ENCODE measurements at regions of chr2 and their contacts with region 1.

Region 1: GRCh38 chr2:127415593-127416505 is 2.4 kb upstream of the PROC start:
- DNase-seq: peak; percentile 70 to 93 (median 80)
- ATAC-seq: peak; percentile 94
- H3K4me3 ChIP-seq: peak overlapping the region; percentile 70
- H3K4me3 Mint-ChIP-seq: peak overlapping the region; percentile 87
- H3K27ac ChIP-seq: no peak overlapping the region
- H3K27ac Mint-ChIP-seq: peak overlapping the region; percentile 45
- H3K4me1 ChIP-seq: peaks cover 28% of the 10 kb centered on the region
- H3K4me1 Mint-ChIP-seq: peaks cover 21% of the 10 kb centered on the region
- H3K27me3 ChIP-seq: peaks cover 0 to 3% of the 10 kb centered on the region in 2 experiments
- H3K27me3 Mint-ChIP-seq: peaks cover 5% of the 10 kb centered on the region
- CTCF ChIP-seq: peak; percentile 78

Region 2: DNA sequence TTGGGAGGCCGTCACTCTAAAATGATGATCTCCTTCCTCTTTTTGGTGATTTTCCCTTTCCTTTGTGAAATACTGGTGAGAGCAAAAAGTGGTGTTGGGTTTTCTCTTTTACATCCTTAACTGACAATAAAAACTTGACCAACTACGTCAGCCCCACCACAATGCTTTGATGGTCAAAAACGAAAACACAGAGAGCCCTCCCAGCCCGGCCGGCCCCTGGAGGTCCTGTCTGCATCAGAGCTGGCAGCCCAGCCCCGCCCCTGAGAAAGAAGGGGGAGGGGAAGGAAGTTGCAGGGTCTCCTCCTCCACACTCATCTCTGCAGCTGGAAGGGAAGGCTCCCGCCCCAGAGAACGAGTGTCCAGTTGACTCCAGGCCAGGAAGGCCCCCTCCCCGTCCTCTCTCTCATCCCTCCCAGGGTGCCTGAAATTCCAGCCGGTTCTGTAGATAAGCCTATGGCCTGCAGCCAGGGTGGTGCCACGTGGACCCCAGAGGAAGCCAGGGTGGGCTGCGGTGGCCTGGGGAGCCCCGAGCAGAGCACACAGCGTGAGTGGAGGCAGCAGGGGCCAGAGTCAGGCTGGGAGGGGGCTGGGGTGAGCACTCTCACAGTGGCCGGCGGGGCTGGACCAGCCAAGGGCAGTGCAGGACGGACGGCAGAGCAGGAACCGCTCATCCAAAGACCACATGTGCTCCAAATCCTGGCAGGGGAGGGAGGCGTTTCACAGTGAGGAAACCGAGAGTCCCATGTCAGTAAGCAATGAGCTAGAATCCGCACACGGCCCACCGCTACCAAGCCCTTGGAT is 328.7 kb before region 1 on chr2:
- CTCF ChIA-PET with region 1: no interaction called
- POLR2A ChIA-PET with region 1: no interaction called
- intact Hi-C with region 1: loop called in 1 of 2 experiments (anchors 10 kb)
- DNase-seq: peak in 1 of 14 experiments; percentile 34
- ATAC-seq: no peak
- H3K4me3 ChIP-seq: no peak overlapping the region
- H3K4me3 Mint-ChIP-seq: no peak overlapping the region
- H3K27ac ChIP-seq: no peak overlapping the region
- H3K27ac Mint-ChIP-seq: peak overlapping the region; percentile 99
- H3K4me1 ChIP-seq: peaks cover 46% of the 10 kb centered on the region
- H3K4me1 Mint-ChIP-seq: peaks cover 38% of the 10 kb centered on the region
- H3K27me3 ChIP-seq: no peaks in the 10 kb centered on the region
- H3K27me3 Mint-ChIP-seq: no peaks in the 10 kb centered on the region
- CTCF ChIP-seq: no peak

Region 3: DNA sequence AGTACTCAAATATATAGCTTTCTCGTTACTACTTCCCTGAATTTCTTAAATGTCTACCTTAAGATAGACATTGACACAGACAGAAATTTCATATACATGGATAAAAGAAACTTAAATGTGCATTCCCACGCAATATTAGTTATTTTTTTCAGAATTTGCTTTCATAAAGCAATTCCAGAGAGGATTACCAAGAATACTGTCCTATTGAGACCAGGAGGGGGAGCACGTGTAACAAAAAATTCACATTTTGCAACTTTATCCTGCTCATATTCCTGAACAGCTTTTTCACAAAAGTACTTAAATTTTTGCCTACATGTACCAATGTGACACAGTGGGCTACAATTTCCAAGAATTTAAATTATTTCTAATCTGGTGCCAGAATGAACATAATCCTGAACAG is 91.2 kb before region 1 on chr2:
- CTCF ChIA-PET with region 1: no interaction called
- POLR2A ChIA-PET with region 1: no interaction called
- intact Hi-C with region 1: loop called in 1 of 2 experiments (anchors 10 kb)
- DNase-seq: peak in 4 of 14 experiments; percentile 9 to 26 (median 20)
- ATAC-seq: no peak
- H3K4me3 ChIP-seq: no peak overlapping the region
- H3K4me3 Mint-ChIP-seq: no peak overlapping the region
- H3K27ac ChIP-seq: no peak overlapping the region
- H3K27ac Mint-ChIP-seq: no peak overlapping the region
- H3K4me1 ChIP-seq: no peaks in the 10 kb centered on the region
- H3K4me1 Mint-ChIP-seq: no peaks in the 10 kb centered on the region
- H3K27me3 ChIP-seq: no peaks in the 10 kb centered on the region
- H3K27me3 Mint-ChIP-seq: no peaks in the 10 kb centered on the region
- CTCF ChIP-seq: peak; percentile 38

Region 4: DNA sequence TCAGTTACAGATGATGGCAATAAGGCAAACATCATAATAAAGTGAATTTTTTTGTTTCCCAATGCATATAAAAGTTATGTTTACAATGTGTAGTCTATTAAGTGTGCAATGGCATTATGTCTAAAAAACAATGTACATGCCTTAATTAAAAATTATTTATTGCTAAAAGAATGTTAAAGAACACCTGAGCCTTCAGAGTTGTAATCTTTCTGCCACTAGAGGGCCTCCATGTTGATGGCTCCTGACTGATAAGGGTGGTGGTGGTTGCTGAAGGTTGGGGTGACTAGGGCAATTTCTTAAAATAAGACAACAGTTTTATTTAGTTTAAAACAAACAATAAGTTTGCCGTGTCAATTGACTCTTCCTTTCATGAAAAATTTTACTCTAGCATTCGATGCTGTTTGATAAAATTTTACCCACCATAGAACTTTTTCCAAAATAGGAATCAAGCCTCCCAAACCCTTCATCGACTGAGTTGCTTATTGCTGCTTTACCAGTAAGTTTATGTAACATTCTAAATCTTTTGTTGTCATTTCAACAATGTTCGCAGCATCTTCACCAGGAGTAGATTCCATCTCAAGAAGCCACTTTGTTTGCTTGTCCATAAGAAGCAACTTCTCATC is 60.4 kb before region 1 on chr2:
- CTCF ChIA-PET with region 1: interaction called, 6 read pairs
- POLR2A ChIA-PET with region 1: no interaction called
- intact Hi-C with region 1: loop called (anchors 1 to 2 kb)
- DNase-seq: peak in 10 of 14 experiments; percentile 6 to 73 (median 22)
- ATAC-seq: peak; percentile 81
- H3K4me3 ChIP-seq: no peak overlapping the region
- H3K4me3 Mint-ChIP-seq: no peak overlapping the region
- H3K27ac ChIP-seq: no peak overlapping the region
- H3K27ac Mint-ChIP-seq: peak overlapping the region; percentile 1
- H3K4me1 ChIP-seq: no peaks in the 10 kb centered on the region
- H3K4me1 Mint-ChIP-seq: peaks cover 82% of the 10 kb centered on the region
- H3K27me3 ChIP-seq: no peaks in the 10 kb centered on the region
- H3K27me3 Mint-ChIP-seq: no peaks in the 10 kb centered on the region
- CTCF ChIP-seq: peak; percentile 79

Region 5: DNA sequence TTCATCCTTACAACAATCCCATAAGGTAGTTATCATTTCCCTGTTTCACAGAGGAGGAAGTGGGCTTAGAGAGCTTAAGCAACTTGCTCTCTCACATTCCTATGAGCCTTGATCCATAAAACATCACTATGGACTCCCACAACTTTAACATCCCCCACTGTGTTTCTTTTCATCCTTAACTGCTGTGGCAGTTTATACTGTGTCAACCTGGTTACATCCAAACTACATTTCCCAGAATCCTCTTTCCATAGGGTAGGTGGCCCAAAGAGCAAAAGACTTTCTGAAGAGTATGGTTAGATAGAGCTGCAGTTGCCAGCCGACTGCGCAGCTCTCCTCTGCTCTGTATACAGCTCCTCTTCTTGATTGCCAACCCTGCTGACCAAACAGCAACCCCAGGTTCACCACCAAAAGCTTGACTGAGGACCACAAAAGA is 50.6 kb before region 1 on chr2:
- CTCF ChIA-PET with region 1: interaction called, 17 read pairs
- POLR2A ChIA-PET with region 1: no interaction called
- intact Hi-C with region 1: no loop called
- DNase-seq: no peak
- ATAC-seq: peak; percentile 60
- H3K4me3 ChIP-seq: no peak overlapping the region
- H3K4me3 Mint-ChIP-seq: no peak overlapping the region
- H3K27ac ChIP-seq: no peak overlapping the region
- H3K27ac Mint-ChIP-seq: peak overlapping the region; percentile 14
- H3K4me1 ChIP-seq: peaks cover 14% of the 10 kb centered on the region
- H3K4me1 Mint-ChIP-seq: peaks cover 77% of the 10 kb centered on the region
- H3K27me3 ChIP-seq: no peaks in the 10 kb centered on the region
- H3K27me3 Mint-ChIP-seq: no peaks in the 10 kb centered on the region
- CTCF ChIP-seq: no peak

Region 6: GRCh38 chr2:127387655-127388422 is 28.0 kb before region 1 on chr2 and contains the start of gene MAP3K2:
- CTCF ChIA-PET with region 1: interaction called, 29 read pairs
- POLR2A ChIA-PET with region 1: interaction called, 20 read pairs
- intact Hi-C with region 1: loop called (anchors 1 to 2 kb)
- DNase-seq: peak; percentile 87 to 99 (median 96)
- ATAC-seq: peak; percentile 69
- H3K4me3 ChIP-seq: peak within 1 kb of the TSS; percentile 82
- H3K4me3 Mint-ChIP-seq: peak within 1 kb of the TSS; percentile 98
- H3K27ac ChIP-seq: peak within 1 kb of the TSS; percentile 99 to 100
- H3K27ac Mint-ChIP-seq: peak within 1 kb of the TSS; percentile 100
- H3K4me1 ChIP-seq: peaks cover 33% of the 10 kb centered on the region
- H3K4me1 Mint-ChIP-seq: peaks cover 69% of the 10 kb centered on the region
- H3K27me3 ChIP-seq: no peaks in the 10 kb centered on the region
- H3K27me3 Mint-ChIP-seq: no peaks in the 10 kb centered on the region
- CTCF ChIP-seq: no peak
- total RNA-seq, gene MAP3K2: 103 to 105 TPM

Region 7: DNA sequence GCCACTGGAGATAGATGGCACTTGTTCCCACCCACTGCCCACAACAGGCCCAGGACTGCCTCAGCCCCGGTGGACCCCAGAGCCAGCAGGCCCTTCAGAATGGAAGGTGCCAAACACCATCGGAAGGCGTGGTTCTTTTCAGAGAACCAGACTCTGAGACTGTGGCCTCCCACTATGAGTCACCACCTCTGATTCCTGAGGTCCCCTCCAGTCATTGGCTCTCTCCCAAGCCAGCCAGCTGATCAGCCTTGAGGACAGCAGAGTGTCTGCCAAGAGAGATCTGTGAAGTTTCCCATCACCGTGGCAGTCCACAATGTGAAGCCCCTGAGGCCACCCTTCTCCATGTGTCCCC is 17.6 kb before region 1 on chr2:
- CTCF ChIA-PET with region 1: interaction called, 20 read pairs
- POLR2A ChIA-PET with region 1: interaction called, 3 read pairs
- intact Hi-C with region 1: no loop called
- DNase-seq: peak in 6 of 14 experiments; percentile 32 to 76 (median 54)
- ATAC-seq: peak; percentile 63
- H3K4me3 ChIP-seq: no peak overlapping the region
- H3K4me3 Mint-ChIP-seq: no peak overlapping the region
- H3K27ac ChIP-seq: no peak overlapping the region
- H3K27ac Mint-ChIP-seq: no peak overlapping the region
- H3K4me1 ChIP-seq: peaks cover 2% of the 10 kb centered on the region
- H3K4me1 Mint-ChIP-seq: no peaks in the 10 kb centered on the region
- H3K27me3 ChIP-seq: no peaks in the 10 kb centered on the region
- H3K27me3 Mint-ChIP-seq: no peaks in the 10 kb centered on the region
- CTCF ChIP-seq: no peak

Region 8: GRCh38 chr2:127453392-127454171 is 37.7 kb after region 1 on chr2:
- CTCF ChIA-PET with region 1: no interaction called
- POLR2A ChIA-PET with region 1: no interaction called
- intact Hi-C with region 1: no loop called
- DNase-seq: no peak
- ATAC-seq: no peak
- H3K4me3 ChIP-seq: no peak overlapping the region
- H3K4me3 Mint-ChIP-seq: no peak overlapping the region
- H3K27ac ChIP-seq: no peak overlapping the region
- H3K27ac Mint-ChIP-seq: no peak overlapping the region
- H3K4me1 ChIP-seq: peaks cover 8% of the 10 kb centered on the region
- H3K4me1 Mint-ChIP-seq: peaks cover 12% of the 10 kb centered on the region
- H3K27me3 ChIP-seq: no peaks in the 10 kb centered on the region
- H3K27me3 Mint-ChIP-seq: no peaks in the 10 kb centered on the region
- CTCF ChIP-seq: no peak

Measured in CD4-positive, alpha-beta T cell (primary cell).